GM13977 (cell line): ENCODE measurements at regions of chr2 and their contacts with region 1.

Region 1: GRCh38 chr2:41879235-41879916 is 168.4 kb upstream of the PKDCC start:
- DNase-seq: no peak
- CTCF ChIP-seq: no peak

Region 2: GRCh38 chr2:42084231-42084671 is 204.9 kb after region 1 on chr2:
- in situ Hi-C with region 1: loop called (anchors 5 kb)
- DNase-seq: no peak
- CTCF ChIP-seq: no peak